WTC11 (cell line): ENCODE measurements at regions of chr7 and their contacts with region 1.

Region 1: GRCh38 chr7:95396136-95397032 is at the start of gene PON3:
- DNase-seq: peak; percentile 66
- ATAC-seq: peak; percentile 95
- H3K4me3 Mint-ChIP-seq: peak within 1 kb of the TSS; percentile 76
- H3K27ac Mint-ChIP-seq: no peak within 1 kb of the TSS; the same call in 1 of the 2 replicates
- H3K4me1 Mint-ChIP-seq: peaks cover 20% of the 10 kb centered on the region
- H3K27me3 Mint-ChIP-seq: peaks cover 15% of the 10 kb centered on the region
- CTCF ChIP-seq: peak; percentile 40; the same call in 1 of the 2 replicates
- total RNA-seq, gene PON3: 0.37 to 0.62 TPM (median 0.42 TPM) in 3 replicates

Region 2: DNA sequence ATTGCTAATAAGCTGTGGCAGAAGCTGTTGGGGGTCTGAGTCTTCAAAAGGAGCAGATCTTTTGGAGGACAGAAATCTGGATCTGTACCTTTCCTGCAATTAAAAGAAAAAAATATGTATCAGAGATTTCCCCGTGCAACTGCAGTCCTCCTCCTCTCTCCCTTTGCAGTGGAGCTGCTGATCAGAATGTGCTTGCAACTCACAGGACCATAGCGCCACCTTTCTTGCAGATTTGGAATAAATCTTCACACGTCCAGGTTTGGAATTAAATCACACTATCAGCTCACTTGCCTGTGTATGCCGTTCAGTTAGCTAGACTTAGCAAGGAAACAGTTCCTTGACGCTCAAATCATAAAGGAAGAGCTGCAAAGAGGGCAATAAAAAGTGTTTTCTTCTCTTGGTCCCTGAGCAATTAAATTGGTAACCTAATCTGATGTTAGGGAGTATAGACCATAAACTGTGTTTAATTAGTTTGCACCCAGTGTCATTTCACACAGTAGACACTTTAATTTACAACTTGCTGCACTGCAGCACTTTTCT is 149.5 kb before region 1 on chr7:
- CTCF ChIA-PET with region 1: interaction called, 12 read pairs
- POLR2A ChIA-PET with region 1: no interaction called
- DNase-seq: peak; percentile 40
- ATAC-seq: peak; percentile 87
- H3K4me3 Mint-ChIP-seq: peak overlapping the region; percentile 43
- H3K27ac Mint-ChIP-seq: no peak overlapping the region; the same call in 1 of the 2 replicates
- H3K4me1 Mint-ChIP-seq: peaks cover 24% of the 10 kb centered on the region
- H3K27me3 Mint-ChIP-seq: no peaks in the 10 kb centered on the region
- CTCF ChIP-seq: peak; percentile 56

Region 3: GRCh38 chr7:95407751-95408150 is 11.4 kb after region 1 on chr7:
- CTCF ChIA-PET with region 1: interaction called, 21 read pairs
- POLR2A ChIA-PET with region 1: interaction called, 3 read pairs
- DNase-seq: no peak
- ATAC-seq: peak; percentile 44; the same call in 1 of the 2 replicates
- H3K4me3 Mint-ChIP-seq: no peak overlapping the region
- H3K27ac Mint-ChIP-seq: peak overlapping the region; percentile 0; the same call in 1 of the 2 replicates
- H3K4me1 Mint-ChIP-seq: peaks cover 3% of the 10 kb centered on the region; the same call in 1 of the 2 replicates
- H3K27me3 Mint-ChIP-seq: no peaks in the 10 kb centered on the region
- CTCF ChIP-seq: no peak

Region 4: DNA sequence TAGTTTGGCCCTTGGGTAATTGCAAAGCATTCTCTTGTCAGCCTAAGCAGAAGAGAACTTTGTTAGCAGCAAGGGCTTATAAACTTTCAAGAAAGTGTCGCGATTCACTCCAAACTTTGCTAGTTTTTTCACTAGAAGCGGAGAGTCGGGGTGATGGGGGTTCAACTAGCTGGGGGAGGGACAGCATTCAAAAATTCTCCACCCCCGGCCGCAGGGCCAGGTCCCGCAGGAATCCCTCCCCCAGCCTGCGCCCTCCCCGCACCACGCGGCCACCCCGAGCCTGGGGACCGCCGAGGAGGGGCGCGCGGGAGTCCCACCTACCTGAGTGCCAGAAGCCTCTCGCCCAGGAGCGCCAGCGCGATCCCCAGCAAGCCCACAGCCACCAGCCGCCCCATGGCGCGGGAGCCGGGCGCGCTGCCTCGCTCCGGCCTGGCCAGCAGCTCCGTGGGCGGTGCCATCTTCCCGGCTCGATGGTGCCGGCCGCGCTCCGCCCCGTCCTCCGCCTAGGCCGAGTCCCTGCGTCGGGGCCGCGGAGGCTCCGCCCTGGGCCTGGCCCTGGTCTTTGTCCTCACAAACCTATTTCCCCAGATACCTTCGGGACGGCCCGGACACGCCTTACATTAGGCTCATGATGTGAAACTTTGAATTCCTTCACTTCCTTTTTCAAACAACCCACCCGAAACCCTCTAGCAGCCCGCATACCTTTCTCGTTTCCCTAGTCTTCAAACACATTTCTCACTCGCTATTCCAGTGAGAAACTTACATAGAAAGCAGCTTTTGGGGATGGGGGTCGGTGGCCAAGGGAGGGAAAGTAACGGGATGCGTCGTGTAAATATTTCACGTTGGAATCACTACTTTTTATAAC is 38.4 kb after region 1 on chr7 and contains the start of gene PON2:
- CTCF ChIA-PET with region 1: interaction called, 12 read pairs
- POLR2A ChIA-PET with region 1: interaction called, 6 read pairs
- DNase-seq: peak; percentile 79
- ATAC-seq: peak; percentile 99
- H3K4me3 Mint-ChIP-seq: peak within 1 kb of the TSS; percentile 88
- H3K27ac Mint-ChIP-seq: peak within 1 kb of the TSS; percentile 90
- H3K4me1 Mint-ChIP-seq: peaks cover 7% of the 10 kb centered on the region
- H3K27me3 Mint-ChIP-seq: no peaks in the 10 kb centered on the region
- CTCF ChIP-seq: no peak
- total RNA-seq, gene PON2: 21.4 to 24.1 TPM (median 23.3 TPM) in 3 replicates

Region 5: DNA sequence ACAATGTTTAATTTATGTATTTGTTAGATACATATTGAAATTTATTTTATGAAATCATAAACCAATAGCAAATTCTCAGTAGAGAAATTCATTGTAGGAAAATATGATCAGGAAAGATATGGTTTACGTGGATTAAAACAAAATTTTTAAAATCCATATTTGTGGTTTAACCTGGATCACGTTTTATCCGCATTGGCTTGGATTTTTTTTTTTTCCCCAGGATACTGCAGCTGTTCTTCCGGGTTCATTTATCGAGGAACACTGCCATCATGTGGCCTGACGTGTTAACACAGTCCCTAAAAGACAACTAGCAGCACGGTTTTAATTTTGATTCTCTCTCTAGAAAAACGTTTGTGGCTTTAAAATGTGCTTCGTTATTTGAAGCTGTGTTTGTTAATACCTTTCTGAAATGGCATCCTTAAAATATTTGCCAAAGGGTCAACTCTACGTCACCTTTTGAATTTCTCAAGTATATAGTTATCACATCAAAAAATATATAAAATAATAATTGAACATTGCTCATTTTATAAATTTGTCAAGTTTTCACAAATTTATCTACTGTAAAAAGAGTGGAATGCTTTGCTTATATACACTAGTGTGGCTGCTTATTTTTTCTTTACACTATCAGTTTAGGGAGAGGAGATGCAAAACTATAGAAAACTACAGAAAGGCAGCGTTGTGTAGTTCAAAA is 80.7 kb after region 1 on chr7:
- CTCF ChIA-PET with region 1: interaction called, 36 read pairs
- POLR2A ChIA-PET with region 1: no interaction called
- DNase-seq: peak; percentile 58
- ATAC-seq: peak; percentile 36
- H3K4me3 Mint-ChIP-seq: no peak overlapping the region; the same call in 1 of the 2 replicates
- H3K27ac Mint-ChIP-seq: no peak overlapping the region
- H3K4me1 Mint-ChIP-seq: peaks cover 20% of the 10 kb centered on the region
- H3K27me3 Mint-ChIP-seq: no peaks in the 10 kb centered on the region
- CTCF ChIP-seq: no peak

Region 6: DNA sequence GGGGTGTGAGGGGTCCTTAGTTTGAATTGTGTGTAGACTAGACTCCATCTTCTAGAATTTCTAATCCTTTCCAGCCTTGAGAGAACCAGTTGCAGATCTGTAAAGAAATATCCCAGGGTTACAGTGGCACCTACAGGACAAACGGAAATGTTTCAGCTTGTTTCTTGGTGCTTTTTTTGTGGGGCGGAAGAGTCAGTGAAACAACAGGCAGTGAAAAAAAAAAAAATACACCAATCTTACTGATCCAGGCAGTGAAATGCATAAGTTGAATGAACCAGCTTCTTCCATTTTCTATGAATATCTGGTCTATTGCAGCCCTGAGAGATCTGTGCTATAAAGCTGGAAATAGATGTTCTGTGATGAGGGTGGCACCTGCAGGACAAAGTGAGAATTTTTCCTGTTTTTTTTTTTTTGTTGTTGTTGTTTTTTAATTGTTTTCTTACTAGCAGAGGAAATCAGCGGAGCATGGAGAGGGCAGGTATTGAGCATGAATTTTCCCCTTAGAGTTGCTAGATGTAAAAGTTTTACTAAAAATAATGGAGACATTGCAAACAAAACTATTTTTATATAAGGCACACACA is 294.1 kb after region 1 on chr7:
- CTCF ChIA-PET with region 1: interaction called, 14 read pairs
- POLR2A ChIA-PET with region 1: no interaction called
- DNase-seq: no peak
- ATAC-seq: peak; percentile 64
- H3K4me3 Mint-ChIP-seq: peak overlapping the region; percentile 29
- H3K27ac Mint-ChIP-seq: no peak overlapping the region
- H3K4me1 Mint-ChIP-seq: peaks cover 6% of the 10 kb centered on the region; the same call in 1 of the 2 replicates
- H3K27me3 Mint-ChIP-seq: no peaks in the 10 kb centered on the region
- CTCF ChIP-seq: peak; percentile 60